Panc1 (cell line): ENCODE measurements at regions of chr7 and their contacts with region 1.

Region 1: DNA sequence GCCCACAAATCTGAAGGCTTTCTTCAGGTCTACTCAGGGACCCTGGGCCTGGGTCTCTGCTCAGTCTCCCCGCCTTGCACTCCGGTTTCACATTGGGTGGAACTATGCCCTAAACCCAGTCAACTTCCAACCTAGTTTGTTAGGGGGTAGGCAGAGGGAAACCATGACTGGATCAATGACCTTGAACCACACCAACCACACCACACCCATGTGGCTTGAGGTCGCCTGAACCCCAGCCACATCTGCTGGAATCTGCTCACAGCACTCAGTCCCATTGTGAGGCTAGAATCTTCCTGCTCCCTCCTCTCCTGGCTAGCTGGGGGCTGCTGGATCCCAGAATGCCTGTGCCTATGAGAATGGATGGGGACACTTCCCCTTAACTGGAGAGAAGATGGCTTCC is 17.9 kb downstream of the RFC2 start:
- DNase-seq: no peak
- ATAC-seq: no peak
- H3K4me3 ChIP-seq: no peak overlapping the region
- H3K27ac ChIP-seq: no peak overlapping the region
- H3K4me1 ChIP-seq: no peaks in the 10 kb centered on the region
- H3K27me3 ChIP-seq: no peaks in the 10 kb centered on the region
- CTCF ChIP-seq: no peak

Region 2: GRCh38 chr7:73645643-73646174 is 590.6 kb before region 1 on chr7:
- CTCF ChIA-PET with region 1: no interaction called
- POLR2A ChIA-PET with region 1: no interaction called
- in situ Hi-C with region 1: no loop called
- intact Hi-C with region 1: no loop called
- DNase-seq: no peak
- ATAC-seq: no peak
- H3K4me3 ChIP-seq: no peak overlapping the region
- H3K27ac ChIP-seq: no peak overlapping the region
- H3K4me1 ChIP-seq: peaks cover 7% of the 10 kb centered on the region; the same call in 1 of the 2 replicates
- H3K27me3 ChIP-seq: peaks cover 3% of the 10 kb centered on the region; the same call in 1 of the 2 replicates
- CTCF ChIP-seq: no peak

Region 3: GRCh38 chr7:74401137-74401859 is 165.0 kb after region 1 on chr7:
- CTCF ChIA-PET with region 1: interaction called, 12 read pairs
- POLR2A ChIA-PET with region 1: no interaction called
- in situ Hi-C with region 1: no loop called
- intact Hi-C with region 1: no loop called
- DNase-seq: peak; percentile 75
- ATAC-seq: peak; percentile 84
- H3K4me3 ChIP-seq: no peak overlapping the region
- H3K27ac ChIP-seq: no peak overlapping the region
- H3K4me1 ChIP-seq: no peaks in the 10 kb centered on the region
- H3K27me3 ChIP-seq: no peaks in the 10 kb centered on the region
- CTCF ChIP-seq: peak; percentile 97